ENCODE measurements at regions of chr11 and their contacts with region 1.

Region 1: GRCh38 chr11:75422253-75423231 is 10.5 kb downstream of the KLHL35 start:
- DNase-seq: peak; percentile 86
- ATAC-seq: peak; percentile 85
- H3K4me3 ChIP-seq: peak overlapping the region in 1 of 3 experiments; percentile 24; a peak in 1 of 6 replicates
- H3K27ac ChIP-seq: peak overlapping the region; percentile 12
- H3K4me1 ChIP-seq: peaks cover 42% of the 10 kb centered on the region
- H3K27me3 ChIP-seq: no peaks in the 10 kb centered on the region
- CTCF ChIP-seq: no peak
- EP300 ChIP-seq: peak in 1 of 2 experiments; percentile 51; a peak in 1 of 4 replicates
- POLR2A ChIP-seq: no peak
- RAD21 ChIP-seq: no peak

Region 2: DNA sequence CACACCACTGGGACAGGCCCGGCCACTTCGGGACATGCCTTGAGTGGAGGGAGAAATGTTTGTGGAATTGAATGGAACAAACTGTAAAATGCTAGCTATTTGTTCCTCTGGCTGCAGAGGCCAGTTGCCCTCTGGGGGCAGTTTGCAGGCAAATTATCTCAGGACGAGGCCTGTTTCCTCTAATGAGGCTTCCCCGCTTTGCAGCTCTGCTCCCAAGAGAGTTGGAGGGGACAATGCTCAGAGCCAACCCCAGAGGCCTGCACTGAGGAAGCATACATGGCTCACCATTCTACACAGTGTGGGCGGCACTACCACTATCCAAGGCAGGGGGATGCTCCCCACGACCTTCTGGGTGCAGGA is 82.5 kb before region 1 on chr11:
- CTCF ChIA-PET with region 1: no interaction called
- POLR2A ChIA-PET with region 1: no interaction called
- in situ Hi-C with region 1: no loop called
- intact Hi-C with region 1: no loop called
- DNase-seq: no peak
- ATAC-seq: no peak
- H3K4me3 ChIP-seq: no peak overlapping the region
- H3K27ac ChIP-seq: no peak overlapping the region
- H3K4me1 ChIP-seq: peaks cover 78% of the 10 kb centered on the region
- H3K27me3 ChIP-seq: no peaks in the 10 kb centered on the region
- CTCF ChIP-seq: no peak
- EP300 ChIP-seq: no peak
- POLR2A ChIP-seq: no peak
- RAD21 ChIP-seq: no peak

Region 3: DNA sequence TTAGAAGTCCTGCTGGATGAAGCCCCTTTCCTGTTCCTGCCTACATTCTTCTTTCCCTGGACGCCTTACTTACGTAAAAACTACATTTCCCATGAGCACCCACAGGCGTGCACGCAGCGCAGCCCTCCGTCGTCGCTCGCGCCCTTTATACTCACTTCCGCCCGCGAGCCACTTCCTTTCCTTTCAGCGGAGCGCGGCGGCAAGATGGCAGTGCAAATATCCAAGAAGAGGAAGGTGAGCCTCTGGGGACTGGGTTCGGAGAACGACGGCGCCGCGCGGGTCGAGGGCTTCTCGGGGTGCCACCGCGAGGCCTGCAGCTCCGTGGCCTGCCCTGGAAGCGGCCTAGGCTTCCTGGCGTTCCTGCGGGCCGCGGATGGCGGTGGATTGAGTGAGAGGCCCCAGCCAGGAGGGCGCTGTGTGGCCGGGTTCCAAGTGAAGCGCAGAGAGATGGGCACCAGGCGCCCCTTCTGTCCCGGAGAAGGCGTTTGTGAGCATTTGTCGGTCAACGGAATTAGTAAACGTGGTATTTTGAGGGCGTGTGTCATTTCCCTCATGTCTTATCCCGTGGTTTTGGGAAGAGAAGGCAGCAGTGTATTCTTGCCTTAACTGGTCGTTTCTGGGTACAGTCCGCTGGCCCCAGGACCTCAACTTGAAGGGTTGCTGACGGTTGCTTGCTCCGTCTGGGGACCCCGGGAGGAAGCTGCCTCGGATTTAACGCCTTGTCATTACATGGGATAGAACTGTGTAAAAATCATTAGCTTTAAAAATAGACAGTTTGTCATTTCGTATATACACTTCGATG is 23.0 kb before region 1 on chr11 and contains the start of gene RPS3:
- CTCF ChIA-PET with region 1: no interaction called
- POLR2A ChIA-PET with region 1: interaction called, 10 read pairs
- in situ Hi-C with region 1: no loop called
- intact Hi-C with region 1: no loop called
- DNase-seq: peak; percentile 88
- ATAC-seq: peak; percentile 91
- H3K4me3 ChIP-seq: peak within 1 kb of the TSS; percentile 91 to 96 (median 96)
- H3K27ac ChIP-seq: peak within 1 kb of the TSS; percentile 93
- H3K4me1 ChIP-seq: peaks cover 40% of the 10 kb centered on the region
- H3K27me3 ChIP-seq: peaks cover 0 to 6% of the 10 kb centered on the region in 2 experiments; a peak in 1 of 5 replicates
- CTCF ChIP-seq: peak; percentile 65
- EP300 ChIP-seq: 0 out of 4 replicates have a peak, but pooled peaks of 1 of the 2 experiments have one; percentile 5
- POLR2A ChIP-seq: peak; percentile 98 to 99
- RAD21 ChIP-seq: peak; percentile 45
- total RNA-seq, gene RPS3: 2,143 and 2,814 TPM in 2 replicates

Region 4: GRCh38 chr11:75408852-75409219 is 13.7 kb before region 1 on chr11:
- CTCF ChIA-PET with region 1: interaction called, 3 read pairs
- POLR2A ChIA-PET with region 1: interaction called, 6 read pairs
- in situ Hi-C with region 1: no loop called
- intact Hi-C with region 1: loop called (anchors 2 kb)
- DNase-seq: no peak
- ATAC-seq: no peak; the same call in 2 of the 3 replicates
- H3K4me3 ChIP-seq: no peak overlapping the region
- H3K27ac ChIP-seq: no peak overlapping the region
- H3K4me1 ChIP-seq: peaks cover 11% of the 10 kb centered on the region
- H3K27me3 ChIP-seq: no peaks in the 10 kb centered on the region
- CTCF ChIP-seq: no peak
- EP300 ChIP-seq: no peak
- POLR2A ChIP-seq: no peak
- RAD21 ChIP-seq: no peak

Region 5: DNA sequence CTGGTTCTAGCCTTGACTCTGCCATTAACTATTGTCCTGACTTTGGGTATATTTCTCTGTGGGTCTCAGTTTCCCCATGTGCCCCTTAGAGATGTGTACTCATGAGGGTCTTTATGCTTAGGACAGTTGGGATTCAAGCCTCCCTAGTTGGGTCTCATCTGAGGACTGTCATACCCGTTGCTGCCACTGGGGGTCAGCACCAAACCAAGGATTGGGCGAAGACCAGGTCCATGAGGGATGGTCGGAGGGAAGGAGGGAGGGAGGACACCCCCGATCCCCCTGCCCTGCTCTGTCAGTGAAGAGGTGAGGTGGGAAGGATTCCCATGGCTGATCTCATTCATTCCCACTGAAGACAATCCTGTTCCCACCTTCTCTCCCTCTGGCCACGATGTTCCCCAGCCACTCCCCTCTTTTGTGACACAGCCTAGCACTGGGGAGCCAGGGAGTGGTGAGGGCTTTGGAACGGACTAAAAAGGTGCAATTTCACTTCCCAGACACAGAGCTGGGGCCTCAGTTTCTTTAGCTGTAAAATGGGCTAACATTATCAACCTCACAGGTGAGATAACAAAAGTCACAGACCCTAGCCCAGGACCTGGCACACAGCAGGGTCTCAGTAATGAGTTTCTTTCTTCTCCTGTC is 22.9 kb after region 1 on chr11:
- CTCF ChIA-PET with region 1: no interaction called
- POLR2A ChIA-PET with region 1: no interaction called
- in situ Hi-C with region 1: no loop called
- intact Hi-C with region 1: no loop called
- DNase-seq: peak; percentile 56
- ATAC-seq: peak; percentile 77
- H3K4me3 ChIP-seq: no peak overlapping the region
- H3K27ac ChIP-seq: no peak overlapping the region
- H3K4me1 ChIP-seq: no peaks in the 10 kb centered on the region
- H3K27me3 ChIP-seq: no peaks in the 10 kb centered on the region
- CTCF ChIP-seq: peak; percentile 97
- EP300 ChIP-seq: no peak
- POLR2A ChIP-seq: no peak
- RAD21 ChIP-seq: peak; percentile 94